PC-3 (cell line): ENCODE measurements at regions of chr1 and their contacts with region 1.

Region 1: GRCh38 chr1:212284744-212285684 is at the start of gene PPP2R5A:
- DNase-seq: peak; percentile 100
- ATAC-seq: peak; percentile 89
- H3K4me3 ChIP-seq: peak within 1 kb of the TSS; percentile 79
- H3K27ac ChIP-seq: peak within 1 kb of the TSS; percentile 68
- H3K4me1 ChIP-seq: peaks cover 29% of the 10 kb centered on the region
- H3K27me3 ChIP-seq: no peaks in the 10 kb centered on the region
- CTCF ChIP-seq: peak; percentile 65
- total RNA-seq, gene PPP2R5A: 44.0 and 64.7 TPM in 2 replicates

Region 2: DNA sequence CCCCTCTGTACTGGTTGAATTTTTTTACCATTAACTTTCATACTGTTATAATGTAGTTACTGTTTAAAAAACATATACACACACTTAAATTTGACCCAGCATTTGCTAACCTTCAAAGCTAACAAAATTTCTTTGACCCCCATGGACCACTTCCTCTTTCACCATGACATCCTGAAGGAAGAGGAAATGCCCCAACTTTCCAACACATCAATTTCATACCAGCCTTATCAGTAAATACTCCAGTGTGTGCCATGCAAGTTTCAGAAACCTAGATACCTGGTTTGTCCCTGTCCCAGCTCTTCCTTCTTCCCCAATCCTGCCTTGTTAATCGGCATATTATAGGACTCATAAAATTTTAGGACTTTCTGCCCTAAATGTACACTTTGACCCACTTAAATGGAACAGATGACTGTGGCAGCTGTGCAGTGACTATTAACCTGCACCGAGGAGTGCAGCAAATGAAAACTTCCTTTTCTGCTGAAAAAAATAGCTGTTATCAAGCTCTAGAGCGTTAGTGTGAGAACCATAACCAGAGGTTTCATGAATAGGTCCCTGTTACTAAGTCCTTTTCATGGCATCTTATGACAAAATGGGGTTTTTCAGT is 195.4 kb before region 1 on chr1:
- CTCF ChIA-PET with region 1: no interaction called
- POLR2A ChIA-PET with region 1: no interaction called
- intact Hi-C with region 1: loop called (anchors 1 kb)
- DNase-seq: no peak
- ATAC-seq: no peak
- H3K4me3 ChIP-seq: no peak overlapping the region
- H3K27ac ChIP-seq: no peak overlapping the region
- H3K4me1 ChIP-seq: peaks cover 18% of the 10 kb centered on the region
- H3K27me3 ChIP-seq: no peaks in the 10 kb centered on the region
- CTCF ChIP-seq: no peak

Region 3: GRCh38 chr1:212234431-212235395 is 50.3 kb before region 1 on chr1:
- CTCF ChIA-PET with region 1: interaction called, 19 read pairs
- POLR2A ChIA-PET with region 1: no interaction called
- intact Hi-C with region 1: loop called (anchors 2 kb)
- DNase-seq: peak; percentile 91
- ATAC-seq: peak; percentile 100
- H3K4me3 ChIP-seq: no peak overlapping the region
- H3K27ac ChIP-seq: peak overlapping the region; percentile 24
- H3K4me1 ChIP-seq: peaks cover 16% of the 10 kb centered on the region
- H3K27me3 ChIP-seq: no peaks in the 10 kb centered on the region
- CTCF ChIP-seq: no peak

Region 4: GRCh38 chr1:212432706-212433576 is 147.9 kb after region 1 on chr1 and contains the start of gene NENF:
- CTCF ChIA-PET with region 1: interaction called, 3 read pairs
- POLR2A ChIA-PET with region 1: no interaction called
- intact Hi-C with region 1: loop called (anchors 10 kb)
- DNase-seq: peak; percentile 98
- ATAC-seq: peak; percentile 99
- H3K4me3 ChIP-seq: peak within 1 kb of the TSS; percentile 76
- H3K27ac ChIP-seq: no peak within 1 kb of the TSS
- H3K4me1 ChIP-seq: peaks cover 23% of the 10 kb centered on the region
- H3K27me3 ChIP-seq: no peaks in the 10 kb centered on the region
- CTCF ChIP-seq: no peak
- total RNA-seq, gene NENF: 153 and 161 TPM in 2 replicates

Region 5: DNA sequence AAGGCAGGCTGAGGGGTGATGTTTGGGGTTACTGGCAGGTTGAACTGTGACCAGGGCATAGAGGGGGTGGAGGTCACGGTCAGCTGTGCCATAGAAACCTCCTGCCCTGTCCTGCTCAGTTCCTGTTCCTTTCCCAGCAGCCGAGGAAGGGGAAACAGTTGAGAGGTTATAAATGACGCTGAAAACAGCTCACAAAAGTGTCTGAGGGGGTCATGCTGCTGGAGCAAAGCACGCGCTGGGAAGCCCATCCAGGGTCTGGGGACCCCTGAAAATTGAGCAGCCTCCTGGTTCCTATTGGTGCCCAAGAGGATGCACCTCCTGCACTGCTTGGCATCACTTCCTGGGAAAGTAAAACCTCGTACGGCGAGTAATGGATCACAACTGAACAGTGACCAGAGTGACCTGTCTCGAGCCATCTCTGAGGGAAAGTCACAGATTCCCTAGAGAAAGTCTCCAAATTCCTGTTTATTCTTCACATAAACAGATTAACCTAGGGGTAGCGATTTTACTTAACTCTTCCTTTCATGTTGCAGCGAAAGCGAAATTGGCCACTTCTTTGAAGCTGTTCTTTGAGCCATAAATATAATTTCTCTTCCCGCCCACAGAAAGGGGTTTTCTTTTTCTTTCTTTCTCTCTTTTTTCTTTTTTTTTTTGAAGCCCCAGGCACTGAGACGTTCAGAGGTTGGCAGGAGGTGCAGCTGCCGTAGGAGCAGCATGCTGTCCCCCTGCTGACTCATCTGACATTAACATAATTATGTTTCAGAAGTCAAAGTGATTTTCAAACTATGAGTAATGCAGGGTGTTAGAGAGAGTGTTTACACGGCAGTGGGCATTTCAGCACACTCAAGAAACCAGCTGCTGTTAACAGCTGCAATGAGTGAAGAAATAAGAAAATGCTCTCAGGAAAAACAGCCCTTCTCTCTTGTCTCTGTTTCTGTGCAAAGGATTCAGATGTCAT is 281.8 kb after region 1 on chr1:
- CTCF ChIA-PET with region 1: no interaction called
- POLR2A ChIA-PET with region 1: no interaction called
- intact Hi-C with region 1: loop called (anchors 10 kb)
- DNase-seq: peak; percentile 81
- ATAC-seq: peak; percentile 91
- H3K4me3 ChIP-seq: peak overlapping the region; percentile 67
- H3K27ac ChIP-seq: peak overlapping the region; percentile 30
- H3K4me1 ChIP-seq: peaks cover 21% of the 10 kb centered on the region
- H3K27me3 ChIP-seq: no peaks in the 10 kb centered on the region
- CTCF ChIP-seq: no peak